ENCODE measurements at regions of chr11 and their contacts with region 1.

Region 1: GRCh38 chr11:65013692-65014145 is 241 bp upstream of the ARL2 start:
- DNase-seq: peak; percentile 70 to 95
- H3K4me3 ChIP-seq: peak overlapping the region; percentile 81 to 91
- H3K27ac ChIP-seq: peak overlapping the region; percentile 99
- H3K4me1 ChIP-seq: peaks cover 3 to 17% of the 10 kb centered on the region in 2 donors
- H3K27me3 ChIP-seq: no peaks in the 10 kb centered on the region
- CTCF ChIP-seq: peak in 2 of 3 experiments; percentile 80

Region 2: GRCh38 chr11:64846998-64847666 is 166.6 kb before region 1 on chr11:
- intact Hi-C with region 1: loop called (anchors 5 kb)
- DNase-seq: peak in 1 of 2 donors; percentile 94
- H3K4me3 ChIP-seq: no peak overlapping the region
- H3K27ac ChIP-seq: no peak overlapping the region
- H3K4me1 ChIP-seq: peaks cover 16 to 17% of the 10 kb centered on the region in 2 donors
- H3K27me3 ChIP-seq: no peaks in the 10 kb centered on the region
- CTCF ChIP-seq: peak; percentile 97 to 98 (median 98)

Region 3: GRCh38 chr11:64924102-64924851 is 89.4 kb before region 1 on chr11 and contains the start of gene PPP2R5B:
- intact Hi-C with region 1: loop called (anchors 1 kb)
- DNase-seq: peak; percentile 92 to 98
- H3K4me3 ChIP-seq: peak within 1 kb of the TSS; percentile 91 to 97
- H3K27ac ChIP-seq: peak within 1 kb of the TSS; percentile 89 to 96
- H3K4me1 ChIP-seq: peaks cover 10 to 21% of the 10 kb centered on the region in 2 donors
- H3K27me3 ChIP-seq: no peaks in the 10 kb centered on the region
- CTCF ChIP-seq: no peak
- total RNA-seq, gene PPP2R5B: 115 TPM

Region 4: DNA sequence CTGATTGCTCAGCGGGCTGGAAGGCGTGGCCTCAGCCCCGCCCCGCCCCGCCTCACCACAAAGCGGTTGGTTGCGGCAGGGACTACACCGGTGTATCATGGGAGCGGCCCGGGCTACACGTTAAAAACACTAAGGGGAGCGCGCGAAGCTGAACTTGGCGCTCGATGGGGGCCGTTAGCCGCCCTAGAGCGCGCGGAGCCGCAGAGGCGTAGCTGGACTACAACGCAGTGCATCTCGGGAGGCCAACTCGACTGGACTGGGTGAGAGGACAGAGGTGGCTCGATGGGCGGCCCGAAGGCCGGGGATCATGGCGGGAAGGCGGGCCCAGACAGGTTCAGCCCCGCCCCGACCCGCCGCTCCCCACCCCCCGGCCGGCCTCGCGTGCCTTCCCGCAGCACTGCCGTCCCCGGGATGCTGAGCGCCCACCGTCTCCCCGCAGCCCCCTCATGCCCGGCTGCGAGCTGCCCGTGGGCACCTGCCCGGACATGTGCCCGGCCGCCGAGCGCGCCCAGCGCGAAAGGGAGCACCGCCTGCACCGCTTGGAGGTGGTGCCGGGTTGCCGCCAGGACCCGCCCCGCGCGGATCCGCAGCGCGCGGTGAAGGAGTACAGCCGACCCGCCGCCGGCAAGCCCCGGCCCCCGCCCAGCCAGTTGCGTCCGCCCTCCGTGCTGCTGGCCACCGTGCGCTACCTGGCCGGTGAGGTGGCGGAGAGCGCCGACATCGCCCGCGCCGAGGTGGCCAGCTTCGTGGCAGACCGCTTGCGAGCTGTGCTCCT is 27.3 kb after region 1 on chr11 and contains the start of gene SAC3D1:
- intact Hi-C with region 1: loop called (anchors 1 kb)
- DNase-seq: peak; percentile 62 to 94
- H3K4me3 ChIP-seq: peak within 1 kb of the TSS; percentile 82 to 95
- H3K27ac ChIP-seq: peak within 1 kb of the TSS; percentile 89
- H3K4me1 ChIP-seq: peaks cover 4 to 6% of the 10 kb centered on the region in 2 donors
- H3K27me3 ChIP-seq: no peaks in the 10 kb centered on the region
- CTCF ChIP-seq: no peak
- total RNA-seq, gene SAC3D1: 19.6 TPM

Region 5: DNA sequence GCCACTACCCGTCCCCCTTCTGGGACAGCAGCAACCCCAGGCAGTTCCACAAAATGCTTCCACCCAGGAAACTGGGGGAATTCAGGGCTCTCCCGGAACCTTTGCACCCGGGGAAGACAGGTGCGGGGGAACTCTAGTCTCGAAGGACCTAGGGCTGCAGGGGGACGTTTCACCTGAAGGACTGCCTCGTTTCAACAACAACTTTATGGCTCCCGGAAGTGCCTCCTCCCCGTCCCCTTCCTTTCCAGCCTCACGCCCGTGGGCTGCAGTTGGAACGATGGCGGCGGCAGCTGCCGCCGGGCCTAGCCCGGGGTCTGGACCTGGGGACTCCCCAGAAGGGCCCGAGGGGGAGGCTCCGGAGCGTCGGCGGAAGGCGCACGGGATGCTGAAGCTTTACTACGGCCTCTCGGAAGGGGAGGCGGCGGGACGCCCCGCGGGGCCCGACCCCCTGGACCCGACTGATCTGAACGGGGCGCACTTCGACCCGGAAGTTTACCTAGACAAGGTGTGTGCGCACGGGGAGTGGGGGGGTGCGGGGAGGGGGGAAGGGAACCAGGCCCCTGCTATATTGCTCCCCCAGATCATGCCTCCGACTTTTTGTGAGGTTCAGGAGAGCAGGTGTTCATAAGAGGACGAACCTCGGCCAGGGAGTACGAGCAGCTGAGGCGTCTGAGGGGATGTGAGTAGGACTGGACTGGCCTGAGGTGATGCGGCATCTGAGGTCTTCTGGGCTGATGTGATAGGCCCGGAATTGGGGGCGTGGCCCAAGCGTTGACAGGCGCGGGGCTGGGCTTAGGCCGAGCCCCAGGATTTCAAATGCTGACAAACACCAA is 82.5 kb after region 1 on chr11 and contains the start of gene VPS51:
- intact Hi-C with region 1: loop called (anchors 5 kb)
- DNase-seq: peak; percentile 66 to 94
- H3K4me3 ChIP-seq: peak within 1 kb of the TSS; percentile 73 to 80
- H3K27ac ChIP-seq: peak within 1 kb of the TSS; percentile 86 to 95
- H3K4me1 ChIP-seq: peaks cover 3 to 15% of the 10 kb centered on the region in 2 donors
- H3K27me3 ChIP-seq: no peaks in the 10 kb centered on the region
- CTCF ChIP-seq: peak in 1 of 3 experiments; percentile 20
- total RNA-seq, gene VPS51: 226 TPM

Region 6: DNA sequence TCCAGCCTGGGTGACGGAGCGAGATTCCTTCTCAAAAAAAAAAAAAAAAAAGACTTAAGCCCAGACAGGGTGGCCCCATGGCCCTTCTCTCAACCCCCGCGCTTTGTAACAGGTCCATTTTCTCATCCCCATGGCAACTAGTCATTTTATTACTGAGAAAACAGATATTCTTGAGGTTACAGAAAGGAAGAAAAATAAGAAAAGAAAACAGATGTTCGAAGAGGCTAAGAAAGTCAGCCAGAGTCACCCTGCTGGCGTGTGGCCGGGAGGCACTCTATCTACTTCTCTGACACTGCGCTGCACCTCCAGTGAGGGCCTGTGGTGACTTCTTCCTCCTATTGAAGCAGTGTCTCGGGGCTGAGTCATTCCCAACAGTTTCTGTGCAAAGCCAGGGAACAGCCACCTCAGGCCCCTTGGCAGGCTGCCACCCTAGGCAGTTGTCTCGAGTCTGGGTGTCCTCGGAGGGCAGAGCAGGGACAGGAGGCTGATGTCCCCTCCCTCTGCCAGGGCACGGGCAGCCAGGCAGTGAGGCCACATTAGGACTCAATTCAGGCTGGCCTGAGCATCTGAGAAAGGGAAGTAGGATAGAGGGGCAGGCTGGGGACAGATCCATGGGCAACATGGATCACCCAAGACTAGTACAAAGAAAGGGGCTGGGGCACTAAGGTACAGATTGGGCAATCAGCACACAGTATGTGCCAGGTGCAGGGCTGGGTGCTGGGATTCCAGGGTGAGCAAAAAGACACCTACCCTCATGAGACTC is 137.0 kb after region 1 on chr11:
- intact Hi-C with region 1: no loop called
- DNase-seq: peak; percentile 90 to 96
- H3K4me3 ChIP-seq: peak overlapping the region in 1 of 2 donors; percentile 19
- H3K27ac ChIP-seq: peak overlapping the region; percentile 68 to 73
- H3K4me1 ChIP-seq: peaks cover 0 to 11% of the 10 kb centered on the region in 2 donors
- H3K27me3 ChIP-seq: no peaks in the 10 kb centered on the region
- CTCF ChIP-seq: no peak

Measured in ascending aorta (tissue), 2 donors.